ENCODE measurements at regions of chr4 and their contacts with region 1.

Region 1: GRCh38 chr4:40976343-40976742 is 226.6 kb downstream of the NSUN7 start:
- DNase-seq: no peak

Region 2: DNA sequence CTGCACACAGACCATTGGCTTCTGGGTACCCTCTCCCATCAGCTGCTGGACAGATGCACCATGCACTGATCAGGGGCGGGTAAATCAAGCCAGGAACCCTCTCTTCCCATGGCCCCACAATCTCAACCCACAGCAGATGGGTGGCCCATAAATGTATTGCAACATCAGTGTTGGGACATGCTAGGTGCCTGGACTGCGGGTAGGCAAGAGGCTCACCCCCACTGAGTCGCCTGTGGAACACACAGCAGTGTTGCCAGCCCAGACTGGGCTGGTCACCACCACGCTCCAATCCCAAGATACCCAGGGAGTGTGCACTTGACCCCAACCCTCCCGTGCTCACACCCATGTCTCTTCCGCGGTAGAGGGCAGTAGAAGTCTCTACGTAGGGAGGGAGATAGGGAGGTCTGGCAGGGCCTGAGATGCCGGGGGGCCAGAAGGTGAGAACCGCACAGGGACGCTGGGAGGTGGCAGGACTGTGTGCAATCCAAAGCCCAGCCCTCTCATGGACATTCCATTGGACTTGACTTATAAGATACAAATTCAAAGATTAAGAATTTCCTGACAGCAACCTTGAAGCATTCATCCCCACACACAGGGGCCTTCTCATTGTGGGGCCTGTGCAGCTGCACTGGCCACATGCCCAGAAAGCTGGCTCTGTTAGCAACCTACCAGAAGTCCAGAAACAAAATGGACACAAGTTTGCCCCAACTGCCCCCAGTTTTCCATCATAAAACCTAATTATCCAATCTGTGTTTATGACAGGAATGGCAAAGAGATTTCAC is 42.9 kb before region 1 on chr4:
- intact Hi-C with region 1: loop called (anchors 1 kb)
- DNase-seq: peak in 9 of 10 donors; percentile 46 to 97 (median 76)

Region 3: GRCh38 chr4:41143311-41144039 is 167.1 kb after region 1 on chr4:
- intact Hi-C with region 1: loop called (anchors 10 kb)
- DNase-seq: no peak

Region 4: DNA sequence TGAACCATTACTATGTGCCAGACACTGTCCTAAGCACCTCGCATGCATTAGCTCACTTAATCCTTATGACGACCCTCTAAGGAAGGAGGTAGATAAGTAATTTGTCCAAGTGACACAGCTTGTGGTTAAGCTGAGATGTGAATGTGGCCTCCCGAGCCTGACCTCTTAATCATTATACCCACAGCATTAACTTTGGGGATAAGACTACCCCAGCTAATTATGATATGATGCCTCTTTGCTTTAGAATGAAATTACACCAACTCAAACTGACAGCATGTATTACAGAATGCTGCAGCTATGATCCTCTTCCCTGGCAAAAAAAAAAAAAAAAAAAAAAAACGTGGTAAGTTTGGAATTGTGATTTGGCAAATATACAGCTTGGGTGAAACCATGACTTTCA is 184.5 kb after region 1 on chr4:
- intact Hi-C with region 1: no loop called
- DNase-seq: no peak

Measured in posterior cingulate gyrus (tissue), 11 donors.